Activated CD8-positive, alpha-beta T cell treated with anti-CD3 and anti-CD28 coated beads for 36 hours (primary cell): ENCODE measurements at regions of chr21 and their contacts with region 1.

Region 1: DNA sequence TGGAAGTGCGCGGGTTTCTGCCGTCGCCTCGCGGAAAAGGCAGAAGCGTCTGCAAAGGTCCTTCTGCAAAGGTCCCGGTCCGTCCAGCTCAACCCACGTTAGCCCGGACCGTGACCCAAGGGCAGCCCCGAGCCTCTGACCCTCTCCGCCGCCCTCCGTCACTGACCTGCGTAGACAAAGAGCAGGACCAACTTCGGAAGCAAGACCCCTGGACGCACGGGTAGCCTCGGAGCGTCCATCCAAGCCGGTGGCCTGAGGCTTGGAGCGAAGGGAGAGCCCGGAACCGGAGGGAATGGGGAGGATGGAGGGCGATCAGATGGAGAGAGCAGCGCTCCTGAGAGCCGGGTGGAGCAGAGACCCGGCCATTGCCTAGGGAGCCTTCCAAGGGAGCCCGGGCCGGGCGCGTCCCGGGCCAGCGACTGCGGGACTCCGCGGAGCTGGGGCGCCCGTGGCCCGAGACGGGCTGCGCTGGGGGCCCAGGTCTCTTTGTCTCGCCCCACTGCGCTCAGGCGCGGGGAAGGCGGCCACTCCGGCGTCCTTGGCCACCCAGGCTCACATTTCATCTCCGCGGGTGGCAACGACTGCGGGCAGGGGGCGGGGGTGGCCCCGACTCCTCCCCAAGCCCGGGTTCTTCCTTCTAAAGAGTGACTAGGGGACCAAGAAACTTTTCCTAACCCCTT is at the start of gene CYYR1:
- DNase-seq: no peak
- ATAC-seq: no peak
- H3K4me3 Mint-ChIP-seq: no peak within 1 kb of the TSS
- H3K27ac Mint-ChIP-seq: no peak within 1 kb of the TSS
- H3K4me1 Mint-ChIP-seq: no peaks in the 10 kb centered on the region
- H3K27me3 Mint-ChIP-seq: peaks cover 18% of the 10 kb centered on the region
- CTCF ChIP-seq: no peak
- total RNA-seq, gene CYYR1: not detected

Region 2: DNA sequence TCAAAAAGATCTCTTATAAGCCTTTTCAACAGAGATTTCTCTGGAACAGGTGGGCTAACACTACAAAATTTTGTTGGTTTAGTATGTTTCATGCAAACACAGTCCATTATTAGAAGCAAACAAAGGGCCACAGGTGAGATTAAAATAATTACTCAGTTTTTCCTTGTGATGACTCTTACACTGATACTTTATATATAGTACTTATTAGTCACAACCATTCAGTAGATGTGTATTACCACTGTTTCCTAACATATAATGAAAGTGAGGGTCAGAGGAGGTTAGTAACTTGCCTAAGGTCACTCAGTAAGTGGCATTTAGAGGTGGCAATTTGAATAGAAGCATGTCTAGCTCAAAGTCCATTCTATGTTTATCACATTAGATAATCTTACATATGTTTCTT is 44.0 kb before region 1 on chr21:
- CTCF ChIA-PET with region 1: no interaction called
- POLR2A ChIA-PET with region 1: no interaction called
- intact Hi-C with region 1: loop called (anchors 5 kb)
- DNase-seq: no peak
- ATAC-seq: no peak
- H3K4me3 Mint-ChIP-seq: no peak overlapping the region
- H3K27ac Mint-ChIP-seq: no peak overlapping the region
- H3K4me1 Mint-ChIP-seq: no peaks in the 10 kb centered on the region
- H3K27me3 Mint-ChIP-seq: no peaks in the 10 kb centered on the region
- CTCF ChIP-seq: no peak

Region 3: DNA sequence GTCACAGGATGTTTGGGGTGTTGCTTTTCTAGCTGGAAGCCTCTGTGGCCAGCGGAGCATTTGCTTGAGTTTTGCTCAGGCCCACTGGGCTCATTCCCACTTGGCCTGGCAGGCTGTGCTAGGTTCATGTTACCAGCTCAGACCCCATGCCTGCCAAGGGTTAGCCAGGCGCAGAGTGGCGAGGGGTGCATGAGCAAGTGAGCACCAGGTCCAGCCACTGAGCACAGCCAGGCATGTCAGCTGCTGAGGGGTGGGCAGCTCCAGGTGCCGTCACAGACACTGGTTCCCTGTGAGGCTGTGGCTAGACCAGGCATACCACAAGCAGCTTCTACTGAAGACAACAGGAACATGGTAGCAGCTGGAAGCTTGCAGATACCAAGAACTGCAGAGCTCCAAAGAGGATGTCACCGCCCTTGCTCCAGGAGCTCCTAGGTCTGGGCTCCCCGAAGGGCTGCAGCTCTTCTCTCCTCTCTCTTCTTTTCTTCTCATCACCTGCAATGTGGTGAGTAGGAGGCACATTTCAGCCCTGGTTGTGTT is 52.2 kb after region 1 on chr21:
- CTCF ChIA-PET with region 1: no interaction called
- POLR2A ChIA-PET with region 1: no interaction called
- intact Hi-C with region 1: no loop called
- DNase-seq: no peak
- ATAC-seq: no peak
- H3K4me3 Mint-ChIP-seq: no peak overlapping the region
- H3K27ac Mint-ChIP-seq: no peak overlapping the region
- H3K4me1 Mint-ChIP-seq: no peaks in the 10 kb centered on the region
- H3K27me3 Mint-ChIP-seq: no peaks in the 10 kb centered on the region
- CTCF ChIP-seq: no peak